Panc1 (cell line): ENCODE measurements at regions of chr15 and their contacts with region 1.

Region 1: DNA sequence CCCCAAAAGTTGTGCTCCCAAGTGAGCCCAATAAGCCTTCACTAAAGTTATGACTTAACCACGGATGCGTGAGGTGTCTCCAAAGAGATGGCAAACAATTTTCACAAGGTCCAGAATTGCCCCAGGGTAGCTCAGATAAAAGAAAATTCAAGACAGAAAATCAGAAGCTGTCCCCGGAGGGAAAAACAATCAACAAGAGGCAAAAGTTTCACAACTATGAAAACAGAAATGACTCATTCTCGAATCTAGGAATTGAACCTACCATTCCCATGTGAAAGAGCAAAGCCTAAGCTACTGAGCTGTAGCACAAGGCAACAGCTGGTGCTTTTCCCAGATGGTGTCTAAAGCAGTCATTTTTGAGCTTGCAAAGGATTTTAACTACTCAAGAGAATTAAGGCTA is 33.5 kb upstream of the MKRN3 start:
- DNase-seq: peak; percentile 20
- ATAC-seq: no peak
- H3K4me3 ChIP-seq: peak overlapping the region in 1 of 2 experiments; percentile 1; a peak in 1 of 4 replicates
- H3K27ac ChIP-seq: no peak overlapping the region
- H3K4me1 ChIP-seq: no peaks in the 10 kb centered on the region
- H3K27me3 ChIP-seq: peaks cover 13% of the 10 kb centered on the region
- CTCF ChIP-seq: no peak

Region 2: GRCh38 chr15:23472678-23473077 is 59.3 kb before region 1 on chr15:
- CTCF ChIA-PET with region 1: no interaction called
- POLR2A ChIA-PET with region 1: no interaction called
- in situ Hi-C with region 1: no loop called
- intact Hi-C with region 1: no loop called
- DNase-seq: no peak
- ATAC-seq: no peak
- H3K4me3 ChIP-seq: no peak overlapping the region
- H3K27ac ChIP-seq: no peak overlapping the region
- H3K4me1 ChIP-seq: no peaks in the 10 kb centered on the region
- H3K27me3 ChIP-seq: no peaks in the 10 kb centered on the region; the same call in 1 of the 2 replicates
- CTCF ChIP-seq: no peak

Region 3: DNA sequence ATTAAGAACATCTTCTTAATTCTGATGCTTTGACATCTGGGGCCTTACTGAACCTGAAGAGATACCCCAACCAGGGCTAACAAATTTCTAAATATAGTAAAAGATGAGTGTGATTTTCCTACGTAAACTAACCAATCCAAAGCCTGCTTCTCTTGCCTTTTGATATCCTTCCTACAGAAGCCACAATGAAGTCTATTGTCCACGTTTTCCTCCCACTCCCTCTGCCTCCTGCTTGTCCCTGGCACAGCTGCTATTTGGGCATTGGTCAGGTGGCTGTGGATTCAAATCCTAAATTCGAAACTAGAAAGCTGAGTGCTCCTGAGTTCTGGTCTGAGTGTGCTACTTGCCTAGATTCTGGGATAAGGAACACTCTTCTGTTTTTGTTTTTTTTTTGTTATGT is 16.1 kb after region 1 on chr15:
- CTCF ChIA-PET with region 1: no interaction called
- POLR2A ChIA-PET with region 1: no interaction called
- in situ Hi-C with region 1: no loop called
- intact Hi-C with region 1: no loop called
- DNase-seq: no peak
- ATAC-seq: no peak
- H3K4me3 ChIP-seq: no peak overlapping the region
- H3K27ac ChIP-seq: no peak overlapping the region
- H3K4me1 ChIP-seq: no peaks in the 10 kb centered on the region
- H3K27me3 ChIP-seq: no peaks in the 10 kb centered on the region; the same call in 1 of the 2 replicates
- CTCF ChIP-seq: no peak

Region 4: GRCh38 chr15:23595368-23595767 is 63.3 kb after region 1 on chr15:
- CTCF ChIA-PET with region 1: no interaction called
- POLR2A ChIA-PET with region 1: interaction called, 10 read pairs
- in situ Hi-C with region 1: no loop called
- intact Hi-C with region 1: no loop called
- DNase-seq: no peak
- ATAC-seq: no peak
- H3K4me3 ChIP-seq: no peak overlapping the region
- H3K27ac ChIP-seq: no peak overlapping the region
- H3K4me1 ChIP-seq: no peaks in the 10 kb centered on the region
- H3K27me3 ChIP-seq: no peaks in the 10 kb centered on the region
- CTCF ChIP-seq: no peak